ENCODE measurements at regions of chr16 and their contacts with region 1.

Region 1: DNA sequence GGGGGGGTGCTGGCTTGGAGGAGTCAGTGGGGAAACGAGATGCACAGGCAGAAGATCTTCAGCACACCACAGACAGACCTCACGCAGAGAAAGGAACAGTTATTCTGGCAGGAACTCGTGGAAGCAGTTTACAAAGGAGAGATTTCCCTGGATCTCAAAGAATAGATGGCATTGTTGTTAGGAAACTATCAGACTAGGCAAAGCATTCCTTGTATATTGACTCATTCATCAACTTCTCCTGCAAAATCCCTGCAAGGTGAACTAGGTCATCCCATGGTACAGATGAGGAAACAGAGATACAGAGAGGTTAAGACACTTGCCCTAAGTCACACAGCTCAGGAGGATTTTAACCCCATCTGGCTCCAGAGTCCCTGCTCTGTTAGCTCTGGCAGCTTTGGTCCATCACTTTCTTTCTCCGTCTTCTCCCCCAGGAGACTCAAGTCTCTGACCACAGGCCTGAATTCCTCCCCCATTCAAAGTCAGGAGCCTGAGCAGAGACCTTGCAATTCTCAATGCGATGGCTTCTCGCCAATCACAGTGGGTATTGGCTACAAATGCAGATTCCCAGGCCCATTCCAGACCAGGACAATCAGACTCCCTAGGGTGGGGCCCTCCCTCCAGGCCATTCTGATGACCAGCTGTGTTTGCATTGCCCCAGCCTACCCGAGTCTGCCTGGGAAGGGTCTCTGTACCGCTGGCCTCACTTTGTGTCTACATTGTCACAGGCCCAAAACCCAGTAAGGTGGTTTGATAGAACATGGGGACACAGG is 56.4 kb downstream of the LITAF start:
- DNase-seq: no peak
- H3K4me3 ChIP-seq: no peak overlapping the region
- H3K4me3 Mint-ChIP-seq: no peak overlapping the region
- H3K27ac ChIP-seq: no peak overlapping the region
- H3K27ac Mint-ChIP-seq: peak overlapping the region in 3 of 7 donors; percentile 10 to 40 (median 18)
- H3K4me1 ChIP-seq: no peaks in the 10 kb centered on the region
- H3K4me1 Mint-ChIP-seq: peaks cover 3 to 11% (median 5%) of the 10 kb centered on the region in 4 donors
- H3K27me3 ChIP-seq: no peaks in the 10 kb centered on the region
- H3K27me3 Mint-ChIP-seq: no peaks in the 10 kb centered on the region

Region 2: DNA sequence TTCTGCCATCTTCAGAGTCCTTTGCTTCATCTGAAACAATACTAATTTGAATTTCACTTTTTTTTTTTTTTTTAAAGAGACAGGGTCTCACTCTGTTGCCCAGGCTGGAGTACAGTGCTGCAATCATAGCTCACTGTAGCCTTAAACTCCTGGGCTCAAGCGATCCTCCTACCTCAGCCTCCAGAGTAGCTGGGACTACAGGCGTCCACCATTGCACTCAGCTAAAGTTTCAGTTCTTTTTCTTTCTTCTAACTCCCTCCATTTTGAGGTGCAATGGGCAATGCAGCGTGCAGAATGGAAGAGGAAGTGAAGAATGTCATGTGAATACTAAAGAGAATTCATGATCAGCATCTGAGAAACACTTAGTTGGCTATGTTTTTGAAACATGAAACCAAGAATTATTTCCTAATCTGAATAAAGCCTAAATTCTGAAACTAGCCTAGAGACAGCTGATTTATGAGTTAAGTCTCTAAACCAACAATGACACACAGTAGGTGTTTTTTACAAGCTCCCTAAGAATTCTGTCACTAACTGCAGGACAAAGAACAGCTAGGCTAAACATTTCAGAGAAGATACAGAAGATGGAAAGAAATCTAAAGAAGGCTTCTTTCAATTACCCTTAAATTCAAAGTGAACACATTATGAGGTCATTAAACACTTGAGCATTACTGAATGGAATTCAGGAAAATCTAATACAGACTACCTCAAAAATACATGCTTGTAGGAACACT is 158.8 kb after region 1 on chr16:
- CTCF ChIA-PET with region 1: interaction called, 10 read pairs
- POLR2A ChIA-PET with region 1: no interaction called
- intact Hi-C with region 1: no loop called
- DNase-seq: no peak
- H3K4me3 ChIP-seq: no peak overlapping the region
- H3K4me3 Mint-ChIP-seq: peak overlapping the region in 1 of 8 donors; percentile 52
- H3K27ac ChIP-seq: no peak overlapping the region
- H3K27ac Mint-ChIP-seq: peak overlapping the region; percentile 19 to 70 (median 48)
- H3K4me1 ChIP-seq: peaks cover 13% of the 10 kb centered on the region
- H3K4me1 Mint-ChIP-seq: peaks cover 11 to 52% (median 17%) of the 10 kb centered on the region in 4 donors
- H3K27me3 ChIP-seq: no peaks in the 10 kb centered on the region
- H3K27me3 Mint-ChIP-seq: no peaks in the 10 kb centered on the region

Measured in CD4-positive, alpha-beta memory T cell (primary cell).